ENCODE measurements at regions of chr22 and their contacts with region 1.

Region 1: GRCh38 chr22:37279331-37280181 is 2.8 kb upstream of the CYTH4 start:
- DNase-seq: peak in 1 of 10 donors; percentile 57

Region 2: GRCh38 chr22:37309211-37310074 is 29.9 kb after region 1 on chr22:
- intact Hi-C with region 1: loop called (anchors 5 kb)
- DNase-seq: no peak